GM23248 (cell line): ENCODE measurements at regions of chr9 and their contacts with region 1.

Region 1: DNA sequence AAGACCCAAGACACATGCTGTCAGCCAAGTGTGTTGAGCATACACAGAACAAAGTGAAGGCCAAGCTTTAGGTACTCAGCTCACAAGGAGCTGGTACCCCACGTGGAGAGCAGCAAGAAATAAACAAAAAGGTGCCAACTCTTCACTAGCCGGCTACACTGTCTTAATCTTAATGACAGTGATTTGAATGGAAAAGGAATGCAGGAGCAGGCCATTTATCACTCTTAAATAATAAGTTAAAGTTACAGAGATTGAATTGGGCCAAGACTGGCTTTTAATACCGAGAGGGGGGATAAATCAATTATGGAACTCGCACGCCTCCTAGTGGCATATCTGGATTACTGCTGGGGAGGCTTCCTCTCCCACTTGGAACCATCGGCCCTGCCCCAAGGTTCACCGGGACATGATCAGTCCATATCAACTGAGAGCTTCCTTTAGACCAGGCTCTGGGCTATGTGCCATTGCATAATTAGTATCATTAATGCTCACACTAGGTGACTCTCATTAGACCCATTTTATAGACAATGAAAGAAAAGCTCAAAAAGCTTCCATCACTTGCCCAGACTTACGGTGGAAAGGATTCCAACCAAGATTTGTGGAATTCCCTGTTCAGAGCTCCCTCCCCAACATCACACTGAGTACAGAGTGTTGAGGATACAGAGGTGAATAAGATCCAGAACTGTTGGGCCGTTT is 94.0 kb downstream of the ACTL7B start:
- DNase-seq: peak; percentile 74
- H3K4me3 ChIP-seq: no peak overlapping the region
- H3K27ac ChIP-seq: no peak overlapping the region
- H3K4me1 ChIP-seq: peaks cover 6% of the 10 kb centered on the region; the same call in 1 of the 2 replicates
- H3K27me3 ChIP-seq: no peaks in the 10 kb centered on the region; the same call in 1 of the 2 replicates

Region 2: DNA sequence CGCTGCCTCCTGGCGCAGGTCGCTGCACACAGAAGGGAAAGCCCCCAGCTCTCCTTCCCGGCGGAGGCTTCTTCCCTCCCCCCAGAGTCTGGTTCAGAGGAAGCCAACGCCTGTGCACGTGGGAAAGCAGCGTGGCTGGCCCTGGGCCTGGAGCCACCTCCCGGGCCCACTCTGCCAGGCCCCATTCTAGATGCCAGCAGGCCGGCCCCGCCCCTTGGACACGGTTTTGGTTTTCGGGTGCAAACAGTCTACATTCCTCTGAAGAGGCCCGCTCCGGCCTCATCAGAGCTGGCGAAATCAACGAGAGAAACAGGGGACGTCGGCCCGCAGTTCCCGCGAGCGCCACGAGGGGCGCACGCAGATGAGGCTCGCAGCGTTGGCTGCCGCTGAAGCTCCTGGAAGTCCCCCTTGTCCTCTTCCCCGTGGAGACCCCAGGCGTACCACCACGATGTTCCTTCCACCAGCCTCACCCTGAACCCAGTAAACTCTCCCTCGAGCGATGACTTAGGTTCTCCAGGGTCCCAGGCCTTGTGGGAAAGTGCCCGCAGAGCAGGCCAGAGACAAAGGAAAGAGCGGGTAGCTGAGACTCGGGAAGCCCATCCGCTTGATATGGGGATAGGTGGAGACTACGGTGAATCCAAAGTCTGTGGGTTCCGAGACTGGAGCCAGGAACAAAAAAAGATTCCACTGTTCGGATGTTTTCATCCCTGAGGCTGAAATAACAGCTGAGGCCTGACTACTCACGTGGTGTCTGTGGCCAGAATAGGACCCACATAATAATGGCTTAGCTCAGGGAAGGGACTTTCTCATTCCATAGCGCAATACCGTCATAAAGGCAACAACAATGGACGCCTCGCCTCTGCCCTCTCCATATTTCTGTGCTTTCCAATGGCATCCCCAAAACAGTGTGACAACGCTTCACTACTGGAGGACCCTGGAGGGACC is 1336.4 kb before region 1 on chr9:
- in situ Hi-C with region 1: loop called (anchors 25 kb)
- DNase-seq: peak; percentile 81
- H3K4me3 ChIP-seq: peak overlapping the region; percentile 44
- H3K27ac ChIP-seq: no peak overlapping the region
- H3K4me1 ChIP-seq: no peaks in the 10 kb centered on the region
- H3K27me3 ChIP-seq: no peaks in the 10 kb centered on the region

Region 3: GRCh38 chr9:107478805-107479204 is 1283.0 kb before region 1 on chr9:
- in situ Hi-C with region 1: loop called (anchors 5 kb)
- DNase-seq: no peak
- H3K4me3 ChIP-seq: no peak overlapping the region
- H3K27ac ChIP-seq: no peak overlapping the region
- H3K4me1 ChIP-seq: peaks cover 13% of the 10 kb centered on the region
- H3K27me3 ChIP-seq: no peaks in the 10 kb centered on the region

Region 4: GRCh38 chr9:108282872-108283271 is 478.9 kb before region 1 on chr9:
- in situ Hi-C with region 1: loop called (anchors 25 kb)
- DNase-seq: peak; percentile 24
- H3K4me3 ChIP-seq: no peak overlapping the region
- H3K27ac ChIP-seq: no peak overlapping the region
- H3K4me1 ChIP-seq: no peaks in the 10 kb centered on the region
- H3K27me3 ChIP-seq: no peaks in the 10 kb centered on the region

Region 5: GRCh38 chr9:108565651-108566378 is 196.0 kb before region 1 on chr9:
- in situ Hi-C with region 1: loop called (anchors 10 kb)
- DNase-seq: peak; percentile 89
- H3K4me3 ChIP-seq: no peak overlapping the region
- H3K27ac ChIP-seq: no peak overlapping the region
- H3K4me1 ChIP-seq: peaks cover 10% of the 10 kb centered on the region; the same call in 1 of the 2 replicates
- H3K27me3 ChIP-seq: no peaks in the 10 kb centered on the region

Region 6: GRCh38 chr9:108664309-108665255 is 97.2 kb before region 1 on chr9:
- in situ Hi-C with region 1: no loop called
- DNase-seq: peak; percentile 71
- H3K4me3 ChIP-seq: no peak overlapping the region
- H3K27ac ChIP-seq: no peak overlapping the region
- H3K4me1 ChIP-seq: peaks cover 52% of the 10 kb centered on the region
- H3K27me3 ChIP-seq: no peaks in the 10 kb centered on the region

Region 7: GRCh38 chr9:108903420-108904103 is 141.8 kb after region 1 on chr9:
- in situ Hi-C with region 1: no loop called
- DNase-seq: no peak
- H3K4me3 ChIP-seq: no peak overlapping the region
- H3K27ac ChIP-seq: no peak overlapping the region
- H3K4me1 ChIP-seq: no peaks in the 10 kb centered on the region
- H3K27me3 ChIP-seq: no peaks in the 10 kb centered on the region